ENCODE measurements at regions of chr4 and their contacts with region 1.

Region 1: DNA sequence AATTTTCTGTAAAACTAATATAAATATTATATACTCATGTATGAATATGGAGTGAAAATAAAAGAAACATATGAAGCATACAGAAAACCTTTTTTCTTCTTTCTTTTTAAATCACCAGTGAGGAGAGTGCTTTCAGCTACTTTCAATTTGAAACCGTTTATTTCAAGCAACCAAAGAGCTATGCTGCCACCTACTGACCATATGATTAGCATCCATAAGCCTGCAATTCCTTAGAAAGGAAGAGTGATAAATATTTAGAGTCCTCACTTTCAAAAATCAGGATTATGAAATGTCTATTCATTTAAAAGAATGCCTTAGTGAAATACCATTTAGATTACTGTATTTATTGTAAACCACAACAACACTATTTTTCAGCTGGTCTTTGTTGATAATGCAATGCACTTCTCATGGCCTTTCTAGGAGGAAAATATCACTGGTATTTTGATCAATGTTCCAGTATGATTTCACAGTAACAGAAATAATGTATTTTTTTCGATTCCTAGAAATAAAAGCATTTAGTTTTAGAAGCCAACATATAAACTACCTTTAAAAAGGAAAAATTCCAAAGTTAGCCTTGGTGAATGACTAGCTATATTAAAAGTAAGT is 667.6 kb downstream of the PCDH18 start:
- DNase-seq: peak; percentile 82
- H3K4me3 ChIP-seq: no peak overlapping the region
- H3K27ac ChIP-seq: no peak overlapping the region
- H3K4me1 ChIP-seq: peaks cover 7% of the 10 kb centered on the region
- H3K27me3 ChIP-seq: no peaks in the 10 kb centered on the region
- CTCF ChIP-seq: peak; percentile 47 to 56
- POLR2A ChIP-seq: no peak

Region 2: GRCh38 chr4:134935320-134935719 is 1929.4 kb before region 1 on chr4:
- CTCF ChIA-PET with region 1: interaction called, 4 read pairs
- POLR2A ChIA-PET with region 1: no interaction called
- dilution Hi-C with region 1: no loop called
- intact Hi-C with region 1: loop called (anchors 2 kb)
- DNase-seq: peak; percentile 49
- H3K4me3 ChIP-seq: no peak overlapping the region
- H3K27ac ChIP-seq: no peak overlapping the region
- H3K4me1 ChIP-seq: no peaks in the 10 kb centered on the region
- H3K27me3 ChIP-seq: no peaks in the 10 kb centered on the region
- CTCF ChIP-seq: peak in 1 of 2 donors; percentile 47
- POLR2A ChIP-seq: no peak

Region 3: GRCh38 chr4:135670548-135670947 is 1194.1 kb before region 1 on chr4:
- CTCF ChIA-PET with region 1: interaction called, 9 read pairs
- POLR2A ChIA-PET with region 1: no interaction called
- dilution Hi-C with region 1: no loop called
- intact Hi-C with region 1: loop called (anchors 2 kb)
- DNase-seq: no peak
- H3K4me3 ChIP-seq: no peak overlapping the region
- H3K27ac ChIP-seq: no peak overlapping the region
- H3K4me1 ChIP-seq: no peaks in the 10 kb centered on the region
- H3K27me3 ChIP-seq: no peaks in the 10 kb centered on the region
- CTCF ChIP-seq: no peak
- POLR2A ChIP-seq: no peak

Region 4: DNA sequence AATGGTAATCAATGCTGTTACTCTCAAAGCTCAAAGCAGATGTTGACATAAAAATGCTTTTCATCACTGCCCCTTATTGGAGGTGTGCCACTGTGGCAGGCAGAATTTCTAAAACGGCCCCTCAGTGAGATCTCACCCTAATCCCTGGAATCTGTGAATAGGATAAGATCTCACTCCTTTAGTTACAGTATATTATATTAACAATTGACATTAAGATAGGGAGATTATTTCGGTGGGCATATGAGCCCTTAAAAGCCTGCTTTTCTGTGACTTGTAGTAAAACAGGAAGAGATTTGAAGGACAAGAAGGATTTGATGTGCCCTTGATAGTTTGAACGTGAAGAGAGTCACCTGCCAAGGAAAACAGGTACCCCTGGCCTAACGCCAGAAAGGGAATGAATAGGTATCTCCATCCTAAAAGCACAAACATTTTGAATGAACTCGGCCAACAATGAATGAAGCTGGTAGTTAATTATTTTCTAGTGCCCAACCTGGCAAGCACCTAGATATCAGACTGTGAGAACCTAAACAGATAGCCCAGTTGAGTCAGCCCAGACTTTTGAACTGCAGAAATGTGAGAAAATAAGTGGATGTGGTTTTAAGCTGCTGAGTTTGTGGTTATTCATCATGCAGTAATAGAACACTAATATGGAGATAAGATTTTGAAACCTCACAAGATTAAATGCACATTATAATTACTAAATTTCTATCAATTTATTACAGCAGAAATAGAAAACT is 214.0 kb before region 1 on chr4:
- CTCF ChIA-PET with region 1: interaction called, 4 read pairs
- POLR2A ChIA-PET with region 1: no interaction called
- dilution Hi-C with region 1: no loop called
- intact Hi-C with region 1: loop called (anchors 5 kb)
- DNase-seq: peak; percentile 63
- H3K4me3 ChIP-seq: no peak overlapping the region
- H3K27ac ChIP-seq: peak overlapping the region; percentile 54
- H3K4me1 ChIP-seq: peaks cover 16% of the 10 kb centered on the region
- H3K27me3 ChIP-seq: no peaks in the 10 kb centered on the region
- CTCF ChIP-seq: no peak
- POLR2A ChIP-seq: no peak

Region 5: GRCh38 chr4:136881666-136882065 is 17.0 kb after region 1 on chr4:
- CTCF ChIA-PET with region 1: interaction called, 14 read pairs
- POLR2A ChIA-PET with region 1: no interaction called
- dilution Hi-C with region 1: no loop called
- intact Hi-C with region 1: no loop called
- DNase-seq: no peak
- H3K4me3 ChIP-seq: no peak overlapping the region
- H3K27ac ChIP-seq: no peak overlapping the region
- H3K4me1 ChIP-seq: no peaks in the 10 kb centered on the region
- H3K27me3 ChIP-seq: no peaks in the 10 kb centered on the region
- CTCF ChIP-seq: no peak
- POLR2A ChIP-seq: no peak

Measured in endothelial cell of umbilical vein (primary cell).